ENCODE measurements at regions of chr2 and their contacts with region 1.

Region 1: DNA sequence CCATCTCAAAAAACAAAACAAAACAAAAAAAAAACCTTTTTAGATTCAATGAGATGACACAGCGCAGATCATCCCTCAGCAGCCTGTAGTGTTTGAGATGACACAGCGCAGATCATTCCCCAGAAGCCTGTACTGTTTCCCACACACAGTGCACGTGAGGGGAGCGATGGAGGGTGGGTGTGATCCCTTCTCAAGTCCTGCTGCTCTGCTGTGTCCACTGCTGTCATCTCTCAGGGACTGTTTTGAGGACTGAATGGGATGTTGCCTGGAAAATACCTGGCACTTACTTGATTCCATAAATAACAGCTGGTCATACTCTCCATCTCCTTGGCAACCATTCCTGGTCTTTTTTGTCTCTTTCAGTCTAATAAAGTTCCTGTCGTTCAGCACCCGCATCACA is 25.7 kb downstream of the TGOLN2 start:
- DNase-seq: no peak
- ATAC-seq: no peak
- H3K4me3 ChIP-seq: no peak overlapping the region
- H3K27ac ChIP-seq: no peak overlapping the region
- H3K4me1 ChIP-seq: peaks cover 0 to 9% of the 10 kb centered on the region in 2 experiments; a peak in 2 of 4 replicates
- H3K27me3 ChIP-seq: no peaks in the 10 kb centered on the region
- CTCF ChIP-seq: no peak
- POLR2A ChIP-seq: no peak
- RAD21 ChIP-seq: no peak

Region 2: DNA sequence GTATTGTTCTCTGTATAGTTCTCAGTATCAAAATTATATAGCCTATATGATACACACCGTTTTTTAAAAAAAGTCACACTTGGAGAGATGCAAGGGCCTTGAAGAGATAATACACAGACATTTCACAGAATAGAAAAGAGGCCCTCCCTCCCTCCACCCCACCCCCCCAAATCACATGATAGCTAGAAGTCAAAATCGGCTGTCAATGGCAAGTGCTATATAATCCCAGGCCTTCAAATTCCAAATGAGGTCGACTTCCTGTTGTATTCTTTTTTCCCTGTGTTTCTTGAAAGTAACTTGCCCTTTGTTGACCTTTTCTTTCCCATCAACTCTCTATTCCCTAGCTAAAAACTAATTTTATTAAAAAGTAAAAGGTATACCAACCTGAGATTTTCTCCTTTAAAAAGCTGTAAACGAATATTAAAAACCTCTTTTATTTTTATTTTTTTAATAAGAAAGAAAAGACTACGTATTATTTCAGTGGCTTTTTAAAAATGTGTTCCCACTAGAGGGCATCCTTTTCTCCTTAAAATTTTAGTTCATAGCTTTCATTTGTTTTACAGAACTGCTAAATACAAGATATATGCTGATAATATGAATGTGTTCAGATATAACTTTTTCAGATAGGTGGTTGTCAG is 284.6 kb before region 1 on chr2:
- CTCF ChIA-PET with region 1: interaction called, 13 read pairs
- POLR2A ChIA-PET with region 1: no interaction called
- RAD21 ChIA-PET with region 1: interaction called in 1 of 2 experiments, 5 read pairs
- intact Hi-C with region 1: no loop called
- DNase-seq: no peak
- ATAC-seq: no peak; the same call in 1 of the 2 replicates
- H3K4me3 ChIP-seq: no peak overlapping the region
- H3K27ac ChIP-seq: peak overlapping the region; percentile 11; the same call in 1 of the 2 replicates
- H3K4me1 ChIP-seq: peaks cover 23 to 38% of the 10 kb centered on the region in 2 experiments
- H3K27me3 ChIP-seq: no peaks in the 10 kb centered on the region
- CTCF ChIP-seq: peak; percentile 29 to 48 (median 34); a peak in 4 of 6 replicates
- POLR2A ChIP-seq: no peak
- RAD21 ChIP-seq: peak; percentile 23; the same call in 1 of the 2 replicates

Region 3: GRCh38 chr2:85066874-85067351 is 235.2 kb before region 1 on chr2:
- CTCF ChIA-PET with region 1: interaction called, 91 read pairs
- POLR2A ChIA-PET with region 1: no interaction called
- RAD21 ChIA-PET with region 1: interaction called, 5 to 13 read pairs
- intact Hi-C with region 1: loop called (anchors 1 kb)
- DNase-seq: peak; percentile 77
- ATAC-seq: peak; percentile 91
- H3K4me3 ChIP-seq: peak overlapping the region; percentile 31 to 40
- H3K27ac ChIP-seq: no peak overlapping the region
- H3K4me1 ChIP-seq: peaks cover 2 to 13% of the 10 kb centered on the region in 2 experiments; a peak in 3 of 4 replicates
- H3K27me3 ChIP-seq: no peaks in the 10 kb centered on the region
- CTCF ChIP-seq: peak; percentile 85 to 91 (median 90)
- POLR2A ChIP-seq: no peak
- RAD21 ChIP-seq: peak; percentile 91

Region 4: GRCh38 chr2:85266146-85267041 is 35.7 kb before region 1 on chr2:
- CTCF ChIA-PET with region 1: interaction called, 5 read pairs
- POLR2A ChIA-PET with region 1: no interaction called
- RAD21 ChIA-PET with region 1: no interaction called
- intact Hi-C with region 1: loop called (anchors 2 kb)
- DNase-seq: peak; percentile 42
- ATAC-seq: peak; percentile 98
- H3K4me3 ChIP-seq: no peak overlapping the region
- H3K27ac ChIP-seq: no peak overlapping the region
- H3K4me1 ChIP-seq: peaks cover 0 to 5% of the 10 kb centered on the region in 2 experiments; a peak in 1 of 4 replicates
- H3K27me3 ChIP-seq: no peaks in the 10 kb centered on the region
- CTCF ChIP-seq: peak; percentile 51 to 98 (median 93); a peak in 5 of 6 replicates
- POLR2A ChIP-seq: no peak
- RAD21 ChIP-seq: peak; percentile 48; the same call in 1 of the 2 replicates